ENCODE measurements at regions of chr7 and their contacts with region 1.

Region 1: DNA sequence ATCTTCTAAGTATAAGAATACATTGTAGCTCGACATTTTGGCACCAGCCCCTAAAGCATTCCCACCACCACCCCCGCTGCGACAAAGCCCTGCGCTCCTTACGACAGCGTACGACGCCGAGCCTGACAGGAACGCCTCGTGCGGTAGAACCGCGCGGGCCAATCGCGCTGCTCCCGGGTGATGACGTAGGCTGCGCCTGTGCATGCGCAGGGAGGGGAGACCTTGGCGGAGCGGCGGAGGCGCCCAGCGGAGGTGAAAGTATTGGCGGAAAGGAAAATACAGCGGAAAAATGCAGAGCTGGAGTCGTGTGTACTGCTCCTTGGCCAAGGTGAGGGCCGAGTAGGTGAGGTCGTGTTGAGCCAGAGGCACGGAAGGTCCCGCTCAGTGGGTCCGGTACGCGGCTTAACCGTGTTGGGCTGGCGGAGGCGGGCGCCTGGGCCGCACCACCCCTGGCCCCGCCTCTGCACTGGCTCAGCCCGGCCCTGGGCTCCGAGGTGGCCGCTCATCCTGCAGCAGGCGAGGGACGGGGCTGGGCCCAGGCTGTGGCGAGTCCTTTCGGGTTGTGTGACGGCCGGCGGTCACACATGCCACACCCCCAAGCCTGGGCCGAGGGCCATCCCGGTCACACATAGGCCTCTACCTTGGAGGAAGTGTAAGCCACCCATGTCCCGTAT is at the start of gene DLD:
- DNase-seq: peak; percentile 93
- H3K4me3 ChIP-seq: peak within 1 kb of the TSS; percentile 82
- H3K27ac ChIP-seq: peak within 1 kb of the TSS; percentile 33
- H3K4me1 ChIP-seq: peaks cover 30% of the 10 kb centered on the region
- CTCF ChIP-seq: no peak
- total RNA-seq, gene DLD: 43.8 and 48.4 TPM in 2 replicates

Region 2: GRCh38 chr7:107902381-107902780 is 11.3 kb after region 1 on chr7:
- CTCF ChIA-PET with region 1: no interaction called
- POLR2A ChIA-PET with region 1: interaction called, 11 read pairs
- intact Hi-C with region 1: no loop called
- DNase-seq: no peak
- H3K4me3 ChIP-seq: no peak overlapping the region
- H3K27ac ChIP-seq: no peak overlapping the region
- H3K4me1 ChIP-seq: peaks cover 4% of the 10 kb centered on the region
- CTCF ChIP-seq: no peak

Measured in OCI-LY7 (cell line).